A673 (cell line): ENCODE measurements at regions of chr1 and their contacts with region 1.

Region 1: DNA sequence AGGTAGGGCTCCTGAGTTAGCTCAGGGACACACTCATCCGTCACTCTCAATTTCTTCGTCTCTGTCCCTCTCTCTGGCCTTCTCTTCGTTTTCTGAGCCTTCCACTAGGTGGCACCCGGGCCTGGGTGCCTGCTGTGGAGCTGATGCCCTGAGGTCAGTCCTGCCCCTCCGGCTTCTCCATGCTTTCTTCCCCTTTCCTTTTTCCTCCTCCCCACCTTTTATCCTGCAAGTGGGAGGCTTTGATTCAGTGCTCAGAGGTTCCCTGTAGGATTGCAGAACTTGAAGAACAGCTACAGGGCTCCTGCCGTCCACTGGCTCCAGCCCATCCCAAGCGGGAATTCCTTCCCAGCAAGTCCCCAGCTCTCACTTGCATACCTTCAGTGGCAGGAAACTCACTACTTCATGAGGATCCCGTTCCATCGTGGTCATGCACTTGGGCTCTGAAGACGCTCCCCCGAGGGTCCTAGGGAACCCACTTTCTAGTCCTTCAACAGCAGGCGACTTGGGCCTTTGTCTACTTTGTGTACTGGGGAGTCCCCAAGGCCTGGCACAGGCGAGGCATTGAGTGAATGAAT is 45.6 kb downstream of the SRRM1 start:
- DNase-seq: peak; percentile 85
- H3K4me3 ChIP-seq: no peak overlapping the region
- H3K27ac ChIP-seq: no peak overlapping the region
- H3K4me1 ChIP-seq: peaks cover 1% of the 10 kb centered on the region
- H3K27me3 ChIP-seq: no peaks in the 10 kb centered on the region
- CTCF ChIP-seq: peak; percentile 92

Region 2: DNA sequence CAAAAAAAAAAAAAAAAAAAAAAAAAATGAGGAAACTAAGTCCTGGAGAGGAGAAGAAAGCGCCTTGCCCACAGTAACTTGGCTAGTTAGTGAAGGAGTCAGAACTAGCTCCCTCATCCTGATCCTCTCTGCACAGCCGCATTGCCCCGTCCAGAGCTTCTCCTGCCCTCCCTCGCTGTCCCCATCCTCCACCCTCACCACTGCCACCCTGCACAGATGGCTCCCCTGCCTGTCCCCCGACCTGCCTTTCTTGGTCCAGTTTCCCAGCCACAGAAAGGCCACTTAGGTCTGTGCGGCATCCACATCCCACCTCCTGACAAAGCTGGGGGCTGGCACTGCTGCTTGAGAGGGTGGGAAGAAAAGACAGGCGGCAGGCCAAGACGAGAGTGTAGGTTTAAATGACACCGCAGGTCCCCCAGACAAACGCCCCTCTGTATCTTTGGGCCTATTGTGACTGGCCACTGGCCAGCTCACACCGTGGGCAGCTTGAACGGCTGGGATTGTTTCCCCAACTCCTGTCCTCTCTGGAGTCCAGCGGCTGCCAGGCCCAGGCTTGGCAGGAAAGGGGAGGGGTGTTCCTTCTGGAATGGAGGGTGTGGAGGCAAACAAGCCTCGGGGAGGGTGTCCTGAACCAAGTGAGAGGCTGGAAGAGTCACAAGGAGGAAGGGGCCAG is 112.7 kb before region 1 on chr1:
- CTCF ChIA-PET with region 1: no interaction called
- POLR2A ChIA-PET with region 1: no interaction called
- intact Hi-C with region 1: no loop called
- DNase-seq: no peak
- H3K4me3 ChIP-seq: no peak overlapping the region
- H3K27ac ChIP-seq: no peak overlapping the region
- H3K4me1 ChIP-seq: no peaks in the 10 kb centered on the region
- H3K27me3 ChIP-seq: no peaks in the 10 kb centered on the region
- CTCF ChIP-seq: no peak

Region 3: DNA sequence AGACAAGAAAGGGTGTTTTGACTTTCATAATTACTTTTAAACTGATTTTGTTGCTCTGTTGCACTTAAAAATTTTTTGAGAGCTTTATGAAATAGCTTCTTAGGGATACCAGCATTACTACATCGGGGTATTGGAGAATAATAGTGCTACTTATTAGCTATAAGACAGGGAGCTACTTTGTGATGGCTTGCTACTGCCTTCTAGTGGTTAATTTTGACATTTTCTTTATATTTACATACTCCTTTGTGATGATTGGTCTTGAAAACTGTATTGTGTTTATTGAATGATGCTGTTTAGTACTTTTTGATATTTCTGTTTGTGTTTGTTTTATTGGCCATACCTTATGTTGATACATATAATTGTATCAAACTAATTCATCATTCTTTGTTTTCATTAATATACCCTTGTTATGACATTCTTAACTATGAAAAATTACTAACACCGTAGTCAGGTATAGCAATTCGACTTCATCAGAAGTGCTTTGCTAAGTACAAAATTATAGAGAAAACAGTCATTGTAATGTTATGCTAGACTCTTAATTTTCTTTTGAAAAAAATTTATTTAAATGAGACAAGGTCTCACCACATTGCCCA is 142.1 kb after region 1 on chr1:
- CTCF ChIA-PET with region 1: interaction called, 116 read pairs
- POLR2A ChIA-PET with region 1: no interaction called
- intact Hi-C with region 1: loop called (anchors 2 kb)
- DNase-seq: peak; percentile 82
- H3K4me3 ChIP-seq: no peak overlapping the region
- H3K27ac ChIP-seq: no peak overlapping the region
- H3K4me1 ChIP-seq: peaks cover 47% of the 10 kb centered on the region
- H3K27me3 ChIP-seq: no peaks in the 10 kb centered on the region
- CTCF ChIP-seq: peak; percentile 81

Region 4: GRCh38 chr1:24847995-24848881 is 159.5 kb after region 1 on chr1:
- CTCF ChIA-PET with region 1: interaction called, 4 read pairs
- POLR2A ChIA-PET with region 1: no interaction called
- intact Hi-C with region 1: loop called (anchors 5 kb)
- DNase-seq: peak; percentile 95
- H3K4me3 ChIP-seq: peak overlapping the region; percentile 60
- H3K27ac ChIP-seq: peak overlapping the region; percentile 65
- H3K4me1 ChIP-seq: peaks cover 12% of the 10 kb centered on the region
- H3K27me3 ChIP-seq: no peaks in the 10 kb centered on the region
- CTCF ChIP-seq: peak; percentile 94

Region 5: GRCh38 chr1:24888971-24889676 is 200.4 kb after region 1 on chr1:
- CTCF ChIA-PET with region 1: no interaction called
- POLR2A ChIA-PET with region 1: interaction called, 13 read pairs
- intact Hi-C with region 1: no loop called
- DNase-seq: no peak
- H3K4me3 ChIP-seq: no peak overlapping the region
- H3K27ac ChIP-seq: no peak overlapping the region
- H3K4me1 ChIP-seq: no peaks in the 10 kb centered on the region
- H3K27me3 ChIP-seq: no peaks in the 10 kb centered on the region
- CTCF ChIP-seq: no peak

Region 6: GRCh38 chr1:25802915-25803314 is 1114.2 kb after region 1 on chr1:
- CTCF ChIA-PET with region 1: interaction called, 14 read pairs
- POLR2A ChIA-PET with region 1: no interaction called
- intact Hi-C with region 1: no loop called
- DNase-seq: no peak
- H3K4me3 ChIP-seq: no peak overlapping the region
- H3K27ac ChIP-seq: no peak overlapping the region
- H3K4me1 ChIP-seq: peaks cover 6% of the 10 kb centered on the region
- H3K27me3 ChIP-seq: no peaks in the 10 kb centered on the region
- CTCF ChIP-seq: no peak